ENCODE measurements at regions of chr17 and their contacts with region 1.

Region 1: GRCh38 chr17:38415250-38416194 is 12.7 kb upstream of the ARHGAP23 start:
- DNase-seq: no peak
- ATAC-seq: peak; percentile 62; the same call in 1 of the 2 replicates
- H3K4me3 ChIP-seq: peak overlapping the region; percentile 26 to 43
- H3K27ac ChIP-seq: peak overlapping the region; percentile 83; the same call in 1 of the 2 replicates
- H3K4me1 ChIP-seq: peaks cover 4% of the 10 kb centered on the region; the same call in 1 of the 2 replicates
- H3K27me3 ChIP-seq: no peaks in the 10 kb centered on the region
- CTCF ChIP-seq: no peak

Region 2: DNA sequence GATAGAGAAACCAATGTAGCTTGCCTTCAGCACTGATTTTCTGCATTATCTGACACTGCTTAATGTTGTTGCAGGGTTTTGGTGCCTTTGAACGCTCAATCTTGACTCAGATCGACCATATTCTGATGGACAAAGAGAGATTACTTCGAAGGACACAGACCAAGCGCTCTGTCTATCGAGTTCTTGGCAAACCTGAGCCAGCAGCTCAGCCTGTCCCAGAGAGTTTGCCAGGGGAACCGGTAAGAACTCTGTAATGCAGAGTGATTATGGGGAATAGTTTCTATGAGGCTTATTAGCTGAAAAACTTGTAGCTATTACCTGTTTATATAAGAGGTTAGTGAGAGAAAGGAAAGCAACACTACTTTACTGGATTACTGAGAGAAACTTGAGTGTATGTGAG is 1426.3 kb before region 1 on chr17:
- CTCF ChIA-PET with region 1: no interaction called
- POLR2A ChIA-PET with region 1: no interaction called
- in situ Hi-C with region 1: no loop called
- intact Hi-C with region 1: no loop called
- DNase-seq: no peak
- ATAC-seq: no peak
- H3K4me3 ChIP-seq: no peak overlapping the region
- H3K27ac ChIP-seq: no peak overlapping the region
- H3K4me1 ChIP-seq: no peaks in the 10 kb centered on the region
- H3K27me3 ChIP-seq: no peaks in the 10 kb centered on the region
- CTCF ChIP-seq: no peak

Region 3: GRCh38 chr17:38351412-38352222 is 63.9 kb before region 1 on chr17 and contains the start of gene SOCS7:
- CTCF ChIA-PET with region 1: interaction called, 30 read pairs
- POLR2A ChIA-PET with region 1: interaction called, 3 read pairs
- in situ Hi-C with region 1: no loop called
- intact Hi-C with region 1: loop called (anchors 2 kb)
- DNase-seq: peak; percentile 20
- ATAC-seq: peak; percentile 97
- H3K4me3 ChIP-seq: peak within 1 kb of the TSS; percentile 65 to 73
- H3K27ac ChIP-seq: peak within 1 kb of the TSS; percentile 98
- H3K4me1 ChIP-seq: peaks cover 27% of the 10 kb centered on the region
- H3K27me3 ChIP-seq: no peaks in the 10 kb centered on the region
- CTCF ChIP-seq: no peak
- total RNA-seq, gene SOCS7: 31.0 TPM

Region 4: GRCh38 chr17:38454516-38454915 is 39.0 kb after region 1 on chr17:
- CTCF ChIA-PET with region 1: no interaction called
- POLR2A ChIA-PET with region 1: no interaction called
- in situ Hi-C with region 1: no loop called
- intact Hi-C with region 1: no loop called
- DNase-seq: peak; percentile 25
- ATAC-seq: peak; percentile 79
- H3K4me3 ChIP-seq: peak overlapping the region; percentile 41 to 49
- H3K27ac ChIP-seq: peak overlapping the region; percentile 78
- H3K4me1 ChIP-seq: peaks cover 46% of the 10 kb centered on the region
- H3K27me3 ChIP-seq: no peaks in the 10 kb centered on the region
- CTCF ChIP-seq: no peak

Region 5: DNA sequence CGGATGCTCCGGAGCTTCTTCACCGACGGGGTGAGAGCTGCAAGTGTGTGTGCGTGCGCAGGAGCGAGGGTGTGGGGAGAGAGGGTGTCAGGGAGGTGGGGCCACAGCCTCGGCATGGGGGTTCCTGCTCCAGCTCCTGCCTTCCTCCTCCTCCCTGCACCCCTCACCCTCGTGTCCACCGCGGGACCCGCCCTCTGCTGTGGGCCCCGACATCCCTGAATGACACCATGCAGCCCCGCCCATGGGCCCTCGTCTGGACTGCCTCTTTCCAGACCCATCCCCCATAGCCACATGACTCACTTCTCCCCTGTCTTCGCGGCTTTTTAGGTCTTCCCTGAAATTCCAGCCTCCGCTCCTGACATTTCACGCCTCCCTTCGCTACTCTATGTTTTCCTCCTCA is 54.4 kb after region 1 on chr17:
- CTCF ChIA-PET with region 1: no interaction called
- POLR2A ChIA-PET with region 1: no interaction called
- in situ Hi-C with region 1: no loop called
- intact Hi-C with region 1: no loop called
- DNase-seq: no peak
- ATAC-seq: no peak
- H3K4me3 ChIP-seq: no peak overlapping the region
- H3K27ac ChIP-seq: no peak overlapping the region
- H3K4me1 ChIP-seq: 0 out of 2 replicates have a peak, but pooled peaks cover 3% of the 10 kb centered on the region
- H3K27me3 ChIP-seq: no peaks in the 10 kb centered on the region
- CTCF ChIP-seq: no peak

Region 6: DNA sequence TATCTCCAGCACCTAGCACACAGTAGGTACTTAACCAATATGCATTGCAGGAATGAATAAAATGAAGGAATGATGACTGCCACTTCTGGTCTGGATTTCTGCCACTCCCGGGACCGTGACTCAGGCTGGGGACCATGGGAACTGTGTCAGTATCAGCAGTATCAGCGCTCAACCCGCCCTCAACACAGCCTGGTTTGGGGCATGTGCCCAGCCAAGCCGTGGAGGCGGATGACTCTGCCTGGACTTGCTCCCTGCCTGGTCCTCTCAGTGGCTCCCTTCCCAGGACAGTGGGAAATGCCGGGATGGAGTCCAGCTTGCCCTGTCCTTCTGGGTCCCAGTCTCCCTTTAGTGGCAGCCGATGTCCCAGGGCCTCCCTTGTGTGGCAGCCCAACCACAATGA is 135.1 kb after region 1 on chr17:
- CTCF ChIA-PET with region 1: no interaction called
- POLR2A ChIA-PET with region 1: no interaction called
- in situ Hi-C with region 1: no loop called
- intact Hi-C with region 1: no loop called
- DNase-seq: no peak
- ATAC-seq: no peak
- H3K4me3 ChIP-seq: no peak overlapping the region
- H3K27ac ChIP-seq: no peak overlapping the region
- H3K4me1 ChIP-seq: no peaks in the 10 kb centered on the region
- H3K27me3 ChIP-seq: no peaks in the 10 kb centered on the region
- CTCF ChIP-seq: no peak